Mammary epithelial cell (primary cell): ENCODE measurements at regions of chr15 and their contacts with region 1.

Region 1: GRCh38 chr15:35117543-35118265 is 32.6 kb upstream of the NANOGP8 start:
- DNase-seq: no peak
- H3K4me3 ChIP-seq: no peak overlapping the region
- H3K27ac ChIP-seq: no peak overlapping the region
- H3K4me1 ChIP-seq: no peaks in the 10 kb centered on the region
- H3K27me3 ChIP-seq: no peaks in the 10 kb centered on the region
- CTCF ChIP-seq: no peak

Region 2: DNA sequence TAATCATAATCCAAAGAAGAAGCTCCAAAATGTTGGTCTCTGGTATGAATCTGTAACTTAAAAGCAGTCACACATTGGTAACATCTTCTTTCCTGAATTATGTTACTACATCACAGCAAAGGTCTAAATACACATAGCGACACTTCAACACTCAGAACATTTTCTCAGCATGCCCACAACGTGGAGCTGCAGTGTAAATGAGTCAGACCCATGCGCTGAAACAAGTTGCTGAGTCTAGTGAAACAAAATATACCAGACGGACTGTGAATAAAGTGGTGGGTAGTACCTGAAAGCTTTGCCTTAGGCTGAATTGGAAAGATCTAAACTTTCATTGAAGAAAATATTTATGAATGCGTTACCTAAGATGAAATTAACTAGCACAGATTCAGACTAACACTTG is 501.1 kb before region 1 on chr15:
- CTCF ChIA-PET with region 1: no interaction called
- dilution Hi-C with region 1: no loop called
- in situ Hi-C with region 1: no loop called
- intact Hi-C with region 1: no loop called
- DNase-seq: peak; percentile 58
- H3K4me3 ChIP-seq: no peak overlapping the region
- H3K27ac ChIP-seq: no peak overlapping the region
- H3K4me1 ChIP-seq: no peaks in the 10 kb centered on the region
- H3K27me3 ChIP-seq: peaks cover 2% of the 10 kb centered on the region
- CTCF ChIP-seq: peak; percentile 11 to 49

Region 3: GRCh38 chr15:35136321-35137189 is 18.9 kb after region 1 on chr15:
- CTCF ChIA-PET with region 1: no interaction called
- dilution Hi-C with region 1: no loop called
- in situ Hi-C with region 1: no loop called
- intact Hi-C with region 1: loop called (anchors 2 kb)
- DNase-seq: no peak
- H3K4me3 ChIP-seq: no peak overlapping the region
- H3K27ac ChIP-seq: no peak overlapping the region
- H3K4me1 ChIP-seq: peaks cover under 1% of the 10 kb centered on the region
- H3K27me3 ChIP-seq: no peaks in the 10 kb centered on the region
- CTCF ChIP-seq: no peak